ENCODE measurements at regions of chr4 and their contacts with region 1.

Region 1: GRCh38 chr4:119041951-119042560 is 93.6 kb upstream of the MYOZ2 start:
- DNase-seq: peak; percentile 68
- H3K4me3 ChIP-seq: no peak overlapping the region
- H3K27ac ChIP-seq: no peak overlapping the region
- H3K4me1 ChIP-seq: peaks cover 18% of the 10 kb centered on the region
- H3K27me3 ChIP-seq: no peaks in the 10 kb centered on the region
- CTCF ChIP-seq: peak; percentile 58 to 74

Region 2: DNA sequence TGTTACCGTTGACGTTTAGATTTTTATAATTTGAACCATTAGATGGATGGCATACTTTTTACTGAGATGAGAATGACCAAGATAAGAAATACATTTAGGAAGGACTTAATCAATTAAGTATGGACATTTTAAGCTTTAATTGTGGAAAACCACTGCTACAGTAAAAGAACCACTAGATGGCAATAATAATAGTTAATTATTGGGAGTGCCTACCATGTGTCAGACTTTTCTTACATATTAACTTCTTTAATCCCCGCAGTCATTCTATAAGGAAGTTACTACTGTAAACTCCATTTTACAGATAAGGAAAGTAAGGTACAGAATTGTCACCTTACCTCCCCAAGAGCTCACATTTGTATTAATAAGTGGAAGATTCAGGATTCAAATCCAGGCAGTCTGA is 45.1 kb after region 1 on chr4:
- CTCF ChIA-PET with region 1: no interaction called
- dilution Hi-C with region 1: no loop called
- in situ Hi-C with region 1: no loop called
- intact Hi-C with region 1: no loop called
- DNase-seq: no peak
- H3K4me3 ChIP-seq: no peak overlapping the region
- H3K27ac ChIP-seq: no peak overlapping the region
- H3K4me1 ChIP-seq: no peaks in the 10 kb centered on the region
- H3K27me3 ChIP-seq: no peaks in the 10 kb centered on the region
- CTCF ChIP-seq: peak; percentile 30 to 40

Region 3: DNA sequence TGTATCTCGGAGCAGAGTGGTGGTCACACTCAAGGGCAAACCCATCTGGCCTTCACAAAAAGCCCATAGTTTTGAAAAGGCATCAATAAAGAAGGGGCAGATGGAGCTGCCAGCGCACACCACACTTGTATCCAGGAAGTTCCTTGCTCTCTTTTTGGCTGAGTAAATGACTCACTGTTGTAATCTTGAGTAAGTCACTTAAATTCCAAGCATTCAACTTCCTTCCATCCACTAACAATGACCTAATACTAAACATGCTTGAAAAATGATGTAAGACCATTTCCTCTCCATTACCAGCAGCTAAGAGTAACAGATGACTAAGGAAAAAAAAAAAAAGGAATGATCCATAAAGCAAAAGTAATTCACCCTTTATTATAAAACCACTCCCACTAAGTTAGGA is 61.2 kb after region 1 on chr4:
- CTCF ChIA-PET with region 1: no interaction called
- dilution Hi-C with region 1: no loop called
- in situ Hi-C with region 1: no loop called
- intact Hi-C with region 1: loop called (anchors 5 kb)
- DNase-seq: peak; percentile 96
- H3K4me3 ChIP-seq: no peak overlapping the region
- H3K27ac ChIP-seq: peak overlapping the region; percentile 91
- H3K4me1 ChIP-seq: peaks cover 34% of the 10 kb centered on the region
- H3K27me3 ChIP-seq: no peaks in the 10 kb centered on the region
- CTCF ChIP-seq: no peak

Region 4: DNA sequence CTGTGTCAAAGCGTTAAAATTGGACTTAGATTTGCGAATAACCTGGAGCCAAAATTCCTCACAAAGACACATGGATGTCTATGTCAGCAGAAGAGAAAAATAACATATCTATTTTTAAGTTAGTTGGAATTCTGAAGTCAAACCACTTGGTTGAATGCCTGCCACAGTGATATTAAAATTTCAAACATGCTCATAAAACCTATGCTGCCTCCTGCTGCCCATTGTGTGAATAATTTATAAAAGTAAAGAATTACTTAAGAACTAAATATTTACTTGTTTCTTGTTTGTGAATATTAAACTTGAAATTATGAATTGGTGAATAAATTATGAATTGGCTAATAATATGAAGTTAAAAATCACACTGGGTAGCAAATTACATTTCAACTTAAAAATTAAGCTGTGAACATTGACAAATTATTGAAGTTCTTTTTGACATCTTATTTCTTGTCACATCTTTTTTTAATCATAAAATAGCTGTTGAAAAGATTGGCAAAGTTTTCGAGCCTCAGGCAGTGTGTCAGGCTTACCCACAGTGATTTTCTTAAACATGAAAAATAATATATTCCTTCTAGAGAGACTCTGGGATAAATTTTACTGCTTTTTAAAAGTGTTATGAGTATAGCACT is 244.4 kb after region 1 on chr4:
- CTCF ChIA-PET with region 1: no interaction called
- dilution Hi-C with region 1: no loop called
- in situ Hi-C with region 1: no loop called
- intact Hi-C with region 1: loop called (anchors 1 kb)
- DNase-seq: peak; percentile 34
- H3K4me3 ChIP-seq: no peak overlapping the region
- H3K27ac ChIP-seq: peak overlapping the region; percentile 15
- H3K4me1 ChIP-seq: no peaks in the 10 kb centered on the region
- H3K27me3 ChIP-seq: no peaks in the 10 kb centered on the region
- CTCF ChIP-seq: peak; percentile 48 to 58